ENCODE measurements at regions of chrX and their contacts with region 1.

Region 1: GRCh38 chrX:104195489-104196084 is 29.3 kb downstream of the FAM199X start:
- DNase-seq: no peak
- H3K4me3 ChIP-seq: no peak overlapping the region
- H3K27ac ChIP-seq: no peak overlapping the region
- H3K4me1 ChIP-seq: no peaks in the 10 kb centered on the region
- H3K27me3 ChIP-seq: no peaks in the 10 kb centered on the region
- CTCF ChIP-seq: peak; percentile 73

Region 2: DNA sequence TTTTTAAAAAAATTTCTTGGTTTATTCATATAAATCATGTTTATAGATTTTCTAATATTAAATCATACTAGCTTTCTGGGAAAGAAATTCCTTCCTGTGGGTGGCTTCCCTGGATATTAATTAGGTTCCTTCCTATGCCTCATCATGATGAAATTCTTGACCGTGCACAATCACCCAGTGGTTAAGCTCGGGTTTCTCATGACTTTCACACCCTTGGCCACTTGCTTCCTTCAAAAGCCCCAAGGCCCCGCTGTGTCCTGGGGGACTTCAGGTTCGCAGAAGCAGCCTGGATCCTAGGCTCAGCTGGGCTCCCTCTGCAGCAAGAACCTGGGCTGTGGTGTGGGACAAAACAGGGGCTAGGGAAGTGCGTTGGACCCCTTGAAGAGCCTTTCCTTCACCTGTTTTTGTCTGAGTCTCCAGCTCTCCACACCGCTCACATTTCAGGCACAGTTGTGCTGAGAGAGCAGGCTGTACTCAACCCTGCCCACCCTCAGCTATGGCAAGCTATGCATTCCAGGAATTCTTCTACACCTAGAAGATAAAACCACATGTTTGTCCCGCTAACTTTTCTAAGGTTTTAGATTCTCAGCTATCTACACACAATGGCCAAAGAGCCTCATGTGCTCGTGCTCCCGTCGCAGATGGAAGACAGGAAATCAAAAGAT is 282.1 kb before region 1 on chrX:
- intact Hi-C with region 1: no loop called
- DNase-seq: no peak
- H3K4me3 ChIP-seq: no peak overlapping the region
- H3K27ac ChIP-seq: no peak overlapping the region
- H3K4me1 ChIP-seq: no peaks in the 10 kb centered on the region
- H3K27me3 ChIP-seq: no peaks in the 10 kb centered on the region
- CTCF ChIP-seq: no peak

Region 3: GRCh38 chrX:104343428-104344129 is 148.0 kb after region 1 on chrX:
- intact Hi-C with region 1: loop called (anchors 5 kb)
- DNase-seq: no peak
- H3K4me3 ChIP-seq: no peak overlapping the region
- H3K27ac ChIP-seq: no peak overlapping the region
- H3K4me1 ChIP-seq: no peaks in the 10 kb centered on the region
- H3K27me3 ChIP-seq: no peaks in the 10 kb centered on the region
- CTCF ChIP-seq: peak; percentile 53

Measured in left ventricle myocardium inferior (tissue), 1 donor.